Activated CD4-positive, alpha-beta memory T cell treated with anti-CD3 and anti-CD28 coated beads for 36 hours (primary cell): ENCODE measurements at regions of chr2 and their contacts with region 1.

Region 1: GRCh38 chr2:203830304-203831055 is 37.1 kb upstream of the CTLA4 start:
- DNase-seq: peak; percentile 90
- H3K4me3 Mint-ChIP-seq: peak overlapping the region; percentile 58
- H3K27ac Mint-ChIP-seq: peak overlapping the region; percentile 98
- H3K4me1 Mint-ChIP-seq: peaks cover 34% of the 10 kb centered on the region
- H3K27me3 Mint-ChIP-seq: no peaks in the 10 kb centered on the region

Region 2: GRCh38 chr2:203688798-203689197 is 141.7 kb before region 1 on chr2:
- CTCF ChIA-PET with region 1: no interaction called
- POLR2A ChIA-PET with region 1: no interaction called
- intact Hi-C with region 1: no loop called
- DNase-seq: no peak
- H3K4me3 Mint-ChIP-seq: no peak overlapping the region
- H3K27ac Mint-ChIP-seq: no peak overlapping the region
- H3K4me1 Mint-ChIP-seq: peaks cover 18% of the 10 kb centered on the region
- H3K27me3 Mint-ChIP-seq: no peaks in the 10 kb centered on the region

Region 3: DNA sequence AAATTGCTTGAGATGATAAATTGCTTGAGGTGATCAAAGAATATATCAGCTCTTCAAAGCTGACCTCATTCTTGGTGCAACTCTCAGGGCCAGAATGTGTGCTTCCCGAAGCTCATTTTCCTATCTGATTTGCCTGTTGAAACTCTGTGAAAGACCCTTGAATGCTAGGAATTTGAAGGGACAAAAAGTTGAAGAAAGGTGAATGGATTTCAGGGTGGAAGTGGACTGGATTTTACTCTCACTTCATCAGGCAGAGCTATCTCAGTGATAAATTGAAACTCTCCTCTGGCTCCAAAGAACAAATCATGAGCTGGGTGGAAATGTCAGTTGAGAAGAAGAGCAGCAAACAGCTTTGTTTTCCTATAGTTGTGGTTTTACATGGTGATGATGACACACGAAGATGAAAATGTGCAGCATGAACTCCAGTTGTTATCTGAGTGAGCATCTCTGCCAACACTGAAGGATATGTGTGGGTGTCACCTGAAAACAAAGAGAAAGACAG is 89.6 kb before region 1 on chr2:
- CTCF ChIA-PET with region 1: no interaction called
- POLR2A ChIA-PET with region 1: interaction called, 10 read pairs
- intact Hi-C with region 1: no loop called
- DNase-seq: peak; percentile 65
- H3K4me3 Mint-ChIP-seq: peak overlapping the region; percentile 58
- H3K27ac Mint-ChIP-seq: peak overlapping the region; percentile 99
- H3K4me1 Mint-ChIP-seq: peaks cover 90% of the 10 kb centered on the region
- H3K27me3 Mint-ChIP-seq: no peaks in the 10 kb centered on the region

Region 4: GRCh38 chr2:203840655-203841205 is 10.2 kb after region 1 on chr2:
- CTCF ChIA-PET with region 1: no interaction called
- POLR2A ChIA-PET with region 1: no interaction called
- intact Hi-C with region 1: loop called (anchors 1 kb)
- DNase-seq: peak; percentile 48
- H3K4me3 Mint-ChIP-seq: no peak overlapping the region
- H3K27ac Mint-ChIP-seq: no peak overlapping the region
- H3K4me1 Mint-ChIP-seq: peaks cover 30% of the 10 kb centered on the region
- H3K27me3 Mint-ChIP-seq: peaks cover 2% of the 10 kb centered on the region

Region 5: DNA sequence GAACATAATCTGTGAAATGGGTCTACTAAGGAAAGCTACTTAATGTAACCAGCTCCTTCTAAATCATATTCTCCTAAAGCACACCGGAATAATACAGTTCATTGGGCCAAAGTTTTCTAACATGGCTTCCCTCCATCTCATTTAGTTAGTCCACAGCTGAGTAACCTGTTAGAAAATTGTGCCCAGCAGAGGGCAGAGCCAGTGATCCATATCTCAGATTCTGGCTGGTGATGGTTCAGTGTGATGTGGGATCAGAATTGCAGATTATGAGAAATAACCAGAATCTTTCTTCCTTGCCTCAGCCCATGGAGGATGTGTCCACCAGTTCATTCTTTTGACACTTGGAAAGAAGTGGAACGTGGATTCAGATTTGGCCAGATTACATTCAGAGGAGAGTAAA is 27.7 kb after region 1 on chr2:
- CTCF ChIA-PET with region 1: interaction called, 3 read pairs
- POLR2A ChIA-PET with region 1: interaction called, 11 read pairs
- intact Hi-C with region 1: loop called (anchors 1 kb)
- DNase-seq: peak; percentile 66
- H3K4me3 Mint-ChIP-seq: peak overlapping the region; percentile 25
- H3K27ac Mint-ChIP-seq: peak overlapping the region; percentile 81
- H3K4me1 Mint-ChIP-seq: peaks cover 84% of the 10 kb centered on the region
- H3K27me3 Mint-ChIP-seq: no peaks in the 10 kb centered on the region

Region 6: GRCh38 chr2:203893401-203893800 is 62.9 kb after region 1 on chr2:
- CTCF ChIA-PET with region 1: no interaction called
- POLR2A ChIA-PET with region 1: interaction called, 4 read pairs
- intact Hi-C with region 1: loop called (anchors 1 kb)
- DNase-seq: no peak
- H3K4me3 Mint-ChIP-seq: peak overlapping the region; percentile 14
- H3K27ac Mint-ChIP-seq: peak overlapping the region; percentile 84
- H3K4me1 Mint-ChIP-seq: peaks cover 77% of the 10 kb centered on the region
- H3K27me3 Mint-ChIP-seq: no peaks in the 10 kb centered on the region